Activated CD4-positive, alpha-beta memory T cell treated with anti-CD3 and anti-CD28 coated beads, Interleukin-2, amount 10 ng/mL, durations not matched to agents 7 days and 5 days (primary cell): ENCODE measurements at regions of chr13 and their contacts with region 1.

Region 1: GRCh38 chr13:48303359-48304142 is at the start of gene RB1:
- DNase-seq: peak; percentile 93
- H3K4me3 Mint-ChIP-seq: peak within 1 kb of the TSS; percentile 95
- H3K27ac Mint-ChIP-seq: peak within 1 kb of the TSS; percentile 92
- H3K4me1 Mint-ChIP-seq: peaks cover 28% of the 10 kb centered on the region
- H3K27me3 Mint-ChIP-seq: no peaks in the 10 kb centered on the region
- total RNA-seq, gene RB1: 40.2 to 41.3 TPM

Region 2: DNA sequence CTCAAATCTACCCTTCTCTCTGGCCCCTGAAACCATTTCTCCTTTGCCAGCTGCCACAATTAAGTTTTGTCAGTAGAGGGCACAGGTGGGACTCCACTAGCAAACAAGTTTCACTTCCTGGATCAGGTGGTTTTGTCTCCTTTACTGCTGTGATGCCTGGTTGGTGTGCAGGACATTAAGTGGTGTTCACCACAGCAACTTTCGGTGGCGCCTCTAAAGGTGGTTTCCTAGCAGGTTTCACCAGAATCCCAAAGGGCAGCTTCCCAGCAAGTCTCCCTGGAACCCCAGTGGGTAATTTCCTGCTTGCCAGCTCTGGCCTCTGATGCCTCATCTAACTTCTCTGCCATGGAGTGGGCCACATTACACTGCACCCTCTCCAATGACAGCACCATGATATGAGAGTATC is 225.3 kb before region 1 on chr13:
- CTCF ChIA-PET with region 1: no interaction called
- POLR2A ChIA-PET with region 1: no interaction called
- DNase-seq: peak; percentile 35
- H3K4me3 Mint-ChIP-seq: no peak overlapping the region
- H3K27ac Mint-ChIP-seq: peak overlapping the region; percentile 31
- H3K4me1 Mint-ChIP-seq: peaks cover 10% of the 10 kb centered on the region
- H3K27me3 Mint-ChIP-seq: no peaks in the 10 kb centered on the region

Region 3: GRCh38 chr13:48094781-48095502 is 208.6 kb before region 1 on chr13 and contains the start of gene MED4:
- CTCF ChIA-PET with region 1: no interaction called
- POLR2A ChIA-PET with region 1: interaction called, 24 read pairs
- DNase-seq: peak; percentile 97
- H3K4me3 Mint-ChIP-seq: peak within 1 kb of the TSS; percentile 93
- H3K27ac Mint-ChIP-seq: peak within 1 kb of the TSS; percentile 82
- H3K4me1 Mint-ChIP-seq: peaks cover 34% of the 10 kb centered on the region
- H3K27me3 Mint-ChIP-seq: peaks cover 3% of the 10 kb centered on the region
- total RNA-seq, gene MED4: 55.2 to 61.1 TPM

Region 4: GRCh38 chr13:48132961-48133360 is 170.6 kb before region 1 on chr13:
- CTCF ChIA-PET with region 1: no interaction called
- POLR2A ChIA-PET with region 1: no interaction called
- DNase-seq: no peak
- H3K4me3 Mint-ChIP-seq: no peak overlapping the region
- H3K27ac Mint-ChIP-seq: no peak overlapping the region
- H3K4me1 Mint-ChIP-seq: no peaks in the 10 kb centered on the region
- H3K27me3 Mint-ChIP-seq: peaks cover 7% of the 10 kb centered on the region

Region 5: GRCh38 chr13:48155848-48156247 is 147.7 kb before region 1 on chr13:
- CTCF ChIA-PET with region 1: no interaction called
- POLR2A ChIA-PET with region 1: interaction called, 11 read pairs
- DNase-seq: peak; percentile 17
- H3K4me3 Mint-ChIP-seq: peak overlapping the region; percentile 3
- H3K27ac Mint-ChIP-seq: peak overlapping the region; percentile 86
- H3K4me1 Mint-ChIP-seq: peaks cover 61% of the 10 kb centered on the region
- H3K27me3 Mint-ChIP-seq: no peaks in the 10 kb centered on the region

Region 6: GRCh38 chr13:48233046-48233907 is 70.3 kb before region 1 on chr13 and contains the start of gene ITM2B:
- CTCF ChIA-PET with region 1: interaction called, 4 read pairs
- POLR2A ChIA-PET with region 1: interaction called, 33 read pairs
- DNase-seq: peak; percentile 65
- H3K4me3 Mint-ChIP-seq: peak within 1 kb of the TSS; percentile 90
- H3K27ac Mint-ChIP-seq: peak within 1 kb of the TSS; percentile 86
- H3K4me1 Mint-ChIP-seq: peaks cover 40% of the 10 kb centered on the region
- H3K27me3 Mint-ChIP-seq: peaks cover 31% of the 10 kb centered on the region
- total RNA-seq, gene ITM2B: 226 to 227 TPM

Region 7: GRCh38 chr13:48318821-48319511 is 15.4 kb after region 1 on chr13:
- CTCF ChIA-PET with region 1: no interaction called
- POLR2A ChIA-PET with region 1: interaction called, 20 read pairs
- DNase-seq: no peak
- H3K4me3 Mint-ChIP-seq: peak overlapping the region; percentile 65
- H3K27ac Mint-ChIP-seq: no peak overlapping the region
- H3K4me1 Mint-ChIP-seq: peaks cover 37% of the 10 kb centered on the region
- H3K27me3 Mint-ChIP-seq: peaks cover 3% of the 10 kb centered on the region